ENCODE measurements at regions of chr3 and their contacts with region 1.

Region 1: GRCh38 chr3:14548321-14548729 is 8.2 kb upstream of the GRIP2 start:
- DNase-seq: peak; percentile 81

Region 2: GRCh38 chr3:14537590-14538447 is 10.5 kb before region 1 on chr3:
- CTCF ChIA-PET with region 1: interaction called, 13 read pairs
- POLR2A ChIA-PET with region 1: no interaction called
- DNase-seq: peak; percentile 70

Measured in HEK293T (cell line).